ENCODE measurements at regions of chr1 and their contacts with region 1.

Region 1: GRCh38 chr1:39919545-39919944 is 17.8 kb upstream of the MYCL start:
- ATAC-seq: peak; percentile 74 to 94 (median 80)
- H3K4me3 ChIP-seq: no peak overlapping the region
- H3K27ac ChIP-seq: no peak overlapping the region
- H3K4me1 ChIP-seq: peaks cover 5 to 7% of the 10 kb centered on the region in 2 donors

Region 2: GRCh38 chr1:39973503-39974135 is 54.1 kb after region 1 on chr1:
- in situ Hi-C with region 1: loop called in 1 of 9 experiments (anchors 10 kb)
- ATAC-seq: peak; percentile 67 to 87 (median 83)
- H3K4me3 ChIP-seq: no peak overlapping the region
- H3K27ac ChIP-seq: no peak overlapping the region
- H3K4me1 ChIP-seq: no peaks in the 10 kb centered on the region